Activated CD4-positive, alpha-beta memory T cell treated with anti-CD3 and anti-CD28 coated beads for 36 hours (primary cell): ENCODE measurements at regions of chr20 and their contacts with region 1.

Region 1: GRCh38 chr20:36439040-36439730 is 102.1 kb upstream of the MYL9 start:
- DNase-seq: peak; percentile 75
- H3K4me3 Mint-ChIP-seq: peak overlapping the region; percentile 18
- H3K27ac Mint-ChIP-seq: no peak overlapping the region
- H3K4me1 Mint-ChIP-seq: peaks cover 2% of the 10 kb centered on the region
- H3K27me3 Mint-ChIP-seq: peaks cover 1% of the 10 kb centered on the region

Region 2: GRCh38 chr20:36214684-36215256 is 224.4 kb before region 1 on chr20:
- CTCF ChIA-PET with region 1: interaction called, 28 read pairs
- POLR2A ChIA-PET with region 1: no interaction called
- intact Hi-C with region 1: no loop called
- DNase-seq: peak; percentile 15
- H3K4me3 Mint-ChIP-seq: no peak overlapping the region
- H3K27ac Mint-ChIP-seq: no peak overlapping the region
- H3K4me1 Mint-ChIP-seq: no peaks in the 10 kb centered on the region
- H3K27me3 Mint-ChIP-seq: no peaks in the 10 kb centered on the region

Region 3: GRCh38 chr20:36235892-36236785 is 203.0 kb before region 1 on chr20 and contains the start of gene AAR2:
- CTCF ChIA-PET with region 1: interaction called, 13 read pairs
- POLR2A ChIA-PET with region 1: no interaction called
- intact Hi-C with region 1: no loop called
- DNase-seq: peak; percentile 89
- H3K4me3 Mint-ChIP-seq: peak within 1 kb of the TSS; percentile 87
- H3K27ac Mint-ChIP-seq: peak within 1 kb of the TSS; percentile 39
- H3K4me1 Mint-ChIP-seq: peaks cover 36% of the 10 kb centered on the region
- H3K27me3 Mint-ChIP-seq: no peaks in the 10 kb centered on the region
- total RNA-seq, gene AAR2: 17.3 to 17.8 TPM

Region 4: DNA sequence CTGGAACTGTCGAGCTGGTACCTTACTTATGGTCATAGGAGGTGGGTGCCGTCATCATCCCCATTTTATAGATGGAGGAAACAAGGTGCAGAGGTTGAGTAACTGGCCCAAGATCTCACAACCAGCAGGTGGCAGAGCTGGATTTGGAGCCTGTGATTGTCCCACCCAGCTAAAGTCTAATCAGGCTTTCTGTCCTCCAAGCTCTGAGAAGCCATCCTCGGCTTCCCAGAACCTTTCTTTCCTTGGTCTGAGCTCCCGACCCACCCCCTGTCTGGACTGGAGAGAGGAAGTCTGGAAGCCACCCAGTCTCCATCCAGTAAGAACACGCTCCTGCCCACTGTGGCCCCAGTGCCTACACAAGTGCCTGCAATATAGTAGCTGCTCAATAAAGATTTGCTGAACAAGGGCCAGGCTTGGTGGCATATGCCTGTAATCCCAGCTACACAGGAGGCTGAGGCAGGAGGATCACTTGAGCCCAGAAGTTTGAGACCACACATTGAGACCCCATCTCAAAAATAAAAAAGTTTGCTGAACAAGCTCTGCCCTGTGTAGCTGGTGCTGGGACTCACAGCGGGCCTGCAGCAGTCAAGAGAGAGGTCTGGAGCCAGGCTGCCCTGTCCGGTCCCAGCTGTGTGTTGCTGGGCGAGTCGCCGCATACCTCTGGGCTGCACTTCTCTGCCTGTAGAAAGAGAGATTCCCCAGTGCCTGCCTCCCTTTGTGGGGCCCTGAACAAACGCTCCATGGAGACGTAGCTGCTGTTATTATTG is 165.6 kb before region 1 on chr20:
- CTCF ChIA-PET with region 1: interaction called, 31 read pairs
- POLR2A ChIA-PET with region 1: no interaction called
- intact Hi-C with region 1: no loop called
- DNase-seq: peak; percentile 18
- H3K4me3 Mint-ChIP-seq: no peak overlapping the region
- H3K27ac Mint-ChIP-seq: no peak overlapping the region
- H3K4me1 Mint-ChIP-seq: no peaks in the 10 kb centered on the region
- H3K27me3 Mint-ChIP-seq: peaks cover 8% of the 10 kb centered on the region

Region 5: GRCh38 chr20:36367907-36368799 is 71.0 kb before region 1 on chr20:
- CTCF ChIA-PET with region 1: no interaction called
- POLR2A ChIA-PET with region 1: no interaction called
- intact Hi-C with region 1: no loop called
- DNase-seq: no peak
- H3K4me3 Mint-ChIP-seq: no peak overlapping the region
- H3K27ac Mint-ChIP-seq: no peak overlapping the region
- H3K4me1 Mint-ChIP-seq: no peaks in the 10 kb centered on the region
- H3K27me3 Mint-ChIP-seq: peaks cover 2% of the 10 kb centered on the region